Activated CD4-positive, alpha-beta memory T cell treated with anti-CD3 and anti-CD28 coated beads for 36 hours (primary cell): ENCODE measurements at regions of chr3 and their contacts with region 1.

Region 1: DNA sequence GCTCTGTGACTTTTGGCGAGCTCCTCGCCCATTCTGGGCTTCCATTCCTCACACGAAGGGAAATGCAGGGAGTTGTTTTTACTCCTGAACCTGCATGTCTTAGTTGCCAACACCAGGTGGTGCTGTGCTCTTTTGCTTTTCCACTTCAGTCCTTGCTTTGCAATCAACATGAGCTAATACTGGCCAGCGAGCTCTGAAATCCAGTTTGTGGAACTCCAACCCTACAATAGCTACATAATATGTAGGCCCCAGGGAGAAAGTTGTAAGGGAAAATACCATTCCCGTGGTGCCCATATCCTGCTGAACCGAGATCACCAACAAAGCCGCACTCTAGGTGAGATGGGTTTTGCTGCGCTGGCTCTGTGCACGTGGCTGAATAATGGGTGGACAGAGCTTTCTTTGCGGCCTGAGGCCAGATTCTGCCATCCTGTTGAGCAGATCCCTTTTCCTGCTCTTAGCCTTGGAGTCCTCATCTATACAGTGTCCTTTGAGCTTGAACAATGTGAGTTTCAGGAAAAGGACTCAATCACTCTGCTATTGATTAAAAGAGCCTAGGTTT is 25.0 kb downstream of the LSM3 start:
- DNase-seq: peak; percentile 48
- H3K4me3 Mint-ChIP-seq: no peak overlapping the region
- H3K27ac Mint-ChIP-seq: no peak overlapping the region
- H3K4me1 Mint-ChIP-seq: peaks cover 2% of the 10 kb centered on the region
- H3K27me3 Mint-ChIP-seq: no peaks in the 10 kb centered on the region

Region 2: GRCh38 chr3:14188041-14188754 is 15.4 kb before region 1 on chr3:
- CTCF ChIA-PET with region 1: interaction called, 11 read pairs
- POLR2A ChIA-PET with region 1: no interaction called
- intact Hi-C with region 1: no loop called
- DNase-seq: no peak
- H3K4me3 Mint-ChIP-seq: no peak overlapping the region
- H3K27ac Mint-ChIP-seq: no peak overlapping the region
- H3K4me1 Mint-ChIP-seq: peaks cover 65% of the 10 kb centered on the region
- H3K27me3 Mint-ChIP-seq: no peaks in the 10 kb centered on the region

Region 3: GRCh38 chr3:14222900-14223594 is 19.4 kb after region 1 on chr3:
- CTCF ChIA-PET with region 1: interaction called, 16 read pairs
- POLR2A ChIA-PET with region 1: no interaction called
- intact Hi-C with region 1: no loop called
- DNase-seq: no peak
- H3K4me3 Mint-ChIP-seq: no peak overlapping the region
- H3K27ac Mint-ChIP-seq: no peak overlapping the region
- H3K4me1 Mint-ChIP-seq: no peaks in the 10 kb centered on the region
- H3K27me3 Mint-ChIP-seq: peaks cover 16% of the 10 kb centered on the region

Region 4: GRCh38 chr3:14467814-14468620 is 264.4 kb after region 1 on chr3:
- CTCF ChIA-PET with region 1: interaction called, 35 read pairs
- POLR2A ChIA-PET with region 1: no interaction called
- intact Hi-C with region 1: loop called (anchors 1 kb)
- DNase-seq: peak; percentile 49
- H3K4me3 Mint-ChIP-seq: no peak overlapping the region
- H3K27ac Mint-ChIP-seq: no peak overlapping the region
- H3K4me1 Mint-ChIP-seq: peaks cover 4% of the 10 kb centered on the region
- H3K27me3 Mint-ChIP-seq: no peaks in the 10 kb centered on the region

Region 5: DNA sequence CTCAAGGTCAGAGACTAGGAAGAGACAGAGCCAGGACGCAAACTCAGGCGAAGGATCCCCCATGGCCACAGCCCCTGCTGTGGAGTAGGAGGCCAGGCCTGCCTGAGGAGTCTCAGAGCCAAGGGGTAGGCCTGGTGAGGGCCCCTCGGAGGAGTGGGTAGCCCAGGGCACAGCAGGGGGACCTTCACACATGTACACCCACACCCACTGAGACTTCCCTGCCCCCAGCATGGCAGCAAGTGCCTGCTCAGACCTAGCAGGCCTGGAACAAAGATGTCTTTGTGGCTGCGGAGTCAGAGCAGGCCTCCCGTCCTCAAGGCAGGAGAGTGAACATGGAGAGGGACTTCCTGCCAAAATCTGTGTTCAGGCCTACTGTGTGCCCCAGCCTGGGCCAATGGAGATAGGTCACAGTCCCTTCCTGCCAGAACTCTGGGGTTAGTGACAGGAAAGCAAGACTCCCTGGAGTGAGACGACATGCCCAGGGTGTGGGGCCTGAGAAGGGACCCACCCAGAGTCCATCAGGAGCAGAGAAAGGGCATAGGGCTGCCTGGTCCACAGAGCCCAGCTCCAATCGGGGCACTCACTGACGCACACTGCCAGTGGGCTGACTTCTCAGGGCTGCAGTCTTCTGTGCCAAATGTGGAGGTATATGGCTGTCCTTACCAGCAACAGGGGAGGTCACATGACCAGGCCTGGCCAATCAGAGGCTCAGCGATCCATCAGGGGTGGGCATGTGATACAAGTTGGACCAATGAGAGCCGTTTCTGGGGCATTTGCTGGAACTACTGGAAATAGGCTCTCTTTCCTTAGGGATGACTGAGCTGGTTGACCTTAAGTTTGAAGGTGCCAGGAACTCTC is 334.2 kb after region 1 on chr3:
- CTCF ChIA-PET with region 1: no interaction called
- POLR2A ChIA-PET with region 1: no interaction called
- intact Hi-C with region 1: no loop called
- DNase-seq: no peak
- H3K4me3 Mint-ChIP-seq: no peak overlapping the region
- H3K27ac Mint-ChIP-seq: no peak overlapping the region
- H3K4me1 Mint-ChIP-seq: no peaks in the 10 kb centered on the region
- H3K27me3 Mint-ChIP-seq: peaks cover 2% of the 10 kb centered on the region